GM12878 (cell line): ENCODE measurements at regions of chr1 and their contacts with region 1.

Region 1: GRCh38 chr1:111603979-111604378 is 15.6 kb upstream of the RAP1A start:
- DNase-seq: no peak
- ATAC-seq: peak; percentile 56
- H3K4me3 ChIP-seq: no peak overlapping the region
- H3K27ac ChIP-seq: peak overlapping the region; percentile 98
- H3K4me1 ChIP-seq: peaks cover 54% of the 10 kb centered on the region
- H3K27me3 ChIP-seq: no peaks in the 10 kb centered on the region
- CTCF ChIP-seq: no peak
- EP300 ChIP-seq: no peak
- POLR2A ChIP-seq: peak; percentile 70
- RAD21 ChIP-seq: no peak

Region 2: GRCh38 chr1:111203681-111204200 is 400.2 kb before region 1 on chr1:
- CTCF ChIA-PET with region 1: no interaction called
- POLR2A ChIA-PET with region 1: no interaction called
- RAD21 ChIA-PET with region 1: no interaction called
- SMC1A ChIA-PET with region 1: no interaction called
- in situ Hi-C with region 1: no loop called
- intact Hi-C with region 1: loop called (anchors 5 kb)
- DNase-seq: peak; percentile 77
- ATAC-seq: peak; percentile 57
- H3K4me3 ChIP-seq: peak overlapping the region; percentile 87
- H3K27ac ChIP-seq: peak overlapping the region; percentile 92
- H3K4me1 ChIP-seq: peaks cover 39% of the 10 kb centered on the region
- H3K27me3 ChIP-seq: no peaks in the 10 kb centered on the region
- CTCF ChIP-seq: no peak
- EP300 ChIP-seq: peak; percentile 30 to 69; a peak in 3 of 4 replicates
- POLR2A ChIP-seq: peak; percentile 72; the same call in 1 of the 2 replicates
- RAD21 ChIP-seq: 0 out of 2 replicates have a peak, but pooled peaks have one; percentile 2

Region 3: DNA sequence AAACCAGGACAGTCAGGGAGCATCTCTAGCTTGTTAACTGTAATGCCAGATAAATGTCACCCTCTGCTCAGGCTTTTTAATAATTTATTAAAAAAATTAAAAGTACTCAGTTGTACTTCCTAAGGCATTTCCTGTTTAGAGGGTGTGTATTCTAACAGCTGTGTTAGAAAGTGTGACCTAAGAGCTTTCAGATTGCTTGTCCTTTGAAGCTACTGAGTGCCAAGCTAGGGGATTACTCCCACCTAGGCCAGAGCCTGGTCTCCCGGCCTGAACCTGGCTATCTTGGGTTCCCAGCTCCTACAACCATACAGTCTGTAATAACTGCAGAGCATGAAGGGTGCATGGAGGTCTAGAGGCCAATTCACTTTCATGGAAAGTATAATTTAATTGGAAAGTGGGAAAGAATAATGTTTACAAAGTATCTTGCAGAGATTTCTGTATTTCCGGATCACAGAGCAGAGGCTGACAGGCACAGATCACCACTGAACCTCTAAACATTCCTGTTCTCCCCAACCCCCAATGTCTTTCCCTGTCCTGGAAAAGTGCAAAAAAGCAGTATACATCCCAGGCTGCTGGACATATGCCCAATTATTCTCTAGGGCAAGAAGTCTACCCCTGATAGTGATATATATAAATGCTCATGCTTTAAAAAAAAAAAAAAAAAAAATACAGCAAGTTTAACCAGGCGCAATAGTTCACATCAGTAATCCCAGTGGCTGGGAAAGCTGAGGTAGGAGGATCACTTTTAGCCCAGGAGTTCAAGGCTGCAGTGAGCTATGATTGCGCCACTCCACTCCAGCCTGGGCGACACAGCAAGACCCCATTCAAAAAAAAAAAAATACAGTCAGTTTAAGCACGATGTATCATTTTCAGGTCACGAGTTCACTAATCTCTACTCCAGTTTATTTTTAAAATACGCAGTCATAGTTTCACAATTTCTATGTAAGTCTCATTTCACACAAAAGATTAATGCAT is 21.0 kb before region 1 on chr1:
- CTCF ChIA-PET with region 1: interaction called, 8 read pairs
- POLR2A ChIA-PET with region 1: interaction called, 7 read pairs
- RAD21 ChIA-PET with region 1: interaction called, 14 read pairs
- SMC1A ChIA-PET with region 1: interaction called, 200 read pairs
- in situ Hi-C with region 1: no loop called
- intact Hi-C with region 1: no loop called
- DNase-seq: no peak
- ATAC-seq: peak; percentile 39
- H3K4me3 ChIP-seq: no peak overlapping the region
- H3K27ac ChIP-seq: no peak overlapping the region
- H3K4me1 ChIP-seq: peaks cover 18% of the 10 kb centered on the region
- H3K27me3 ChIP-seq: no peaks in the 10 kb centered on the region
- CTCF ChIP-seq: no peak
- EP300 ChIP-seq: no peak
- POLR2A ChIP-seq: no peak
- RAD21 ChIP-seq: no peak

Region 4: DNA sequence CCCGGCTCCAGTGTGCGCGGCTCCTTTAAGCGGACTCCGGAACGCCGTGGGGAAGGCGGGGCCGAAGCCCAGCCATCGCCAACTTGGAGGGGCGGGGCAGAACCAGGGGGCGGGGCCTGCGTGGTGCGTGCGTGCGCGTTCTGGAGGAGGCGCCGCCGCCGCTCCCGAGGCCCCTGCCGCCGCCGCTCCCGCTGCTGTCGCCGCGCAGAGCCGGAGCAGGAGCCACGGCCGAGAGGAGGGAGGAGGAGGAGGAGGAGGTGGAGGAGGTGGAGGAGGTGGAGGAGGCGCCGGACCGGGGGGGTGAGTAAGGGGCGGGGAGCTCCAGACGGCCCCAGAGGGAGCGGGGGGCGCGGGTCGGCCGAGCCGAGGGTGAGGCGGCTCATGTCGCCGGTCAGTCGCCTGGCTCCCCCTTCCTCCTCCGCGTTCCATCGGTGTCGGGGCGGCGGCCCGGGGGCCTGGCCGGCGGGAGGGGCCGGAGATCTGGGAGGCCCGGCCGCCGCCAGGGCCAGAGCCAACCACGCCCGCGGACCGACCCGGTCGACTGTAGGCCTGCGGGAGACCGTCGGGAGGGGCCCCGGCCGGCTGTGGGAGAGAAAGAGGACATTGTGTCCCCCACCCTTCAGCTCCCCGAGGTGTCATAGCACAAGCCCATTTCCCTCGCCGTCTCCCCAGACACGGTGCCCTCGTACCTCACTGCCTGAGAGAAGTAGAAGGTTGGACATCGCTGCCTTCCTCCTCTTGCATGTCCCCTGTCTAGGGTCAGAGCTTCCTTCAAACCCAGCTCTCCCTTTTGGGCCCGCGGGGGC is 15.9 kb after region 1 on chr1 and contains the start of gene RAP1A:
- CTCF ChIA-PET with region 1: interaction called, 143 read pairs
- POLR2A ChIA-PET with region 1: interaction called, 242 read pairs
- RAD21 ChIA-PET with region 1: interaction called, 116 read pairs
- SMC1A ChIA-PET with region 1: interaction called, 317 read pairs
- in situ Hi-C with region 1: no loop called
- intact Hi-C with region 1: loop called (anchors 1 kb)
- DNase-seq: peak; percentile 55
- ATAC-seq: peak; percentile 64
- H3K4me3 ChIP-seq: peak within 1 kb of the TSS; percentile 87
- H3K27ac ChIP-seq: peak within 1 kb of the TSS; percentile 94
- H3K4me1 ChIP-seq: peaks cover 34% of the 10 kb centered on the region
- H3K27me3 ChIP-seq: no peaks in the 10 kb centered on the region
- CTCF ChIP-seq: no peak
- EP300 ChIP-seq: no peak
- POLR2A ChIP-seq: peak; percentile 84
- RAD21 ChIP-seq: no peak
- polyA plus RNA-seq, gene RAP1A: 71.8 to 93.7 TPM

Region 5: DNA sequence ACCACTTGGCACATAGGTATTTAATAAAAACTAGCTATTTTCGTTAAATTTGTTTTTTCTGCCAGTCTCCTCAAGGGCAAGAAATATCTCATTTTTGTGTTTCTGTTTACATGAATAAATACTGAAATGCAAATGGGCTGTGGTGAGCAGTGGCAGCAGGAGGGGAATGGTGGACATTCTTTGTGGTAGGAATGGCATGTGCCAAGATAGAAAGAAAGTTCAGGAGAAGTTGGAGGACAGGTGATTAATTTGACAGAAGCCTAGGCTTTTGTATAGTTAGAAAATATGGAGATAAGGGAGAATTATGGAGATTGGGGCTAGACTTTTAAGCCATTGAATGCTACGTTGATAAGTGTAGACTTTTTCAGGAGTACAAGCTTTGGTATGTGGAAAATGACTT is 24.2 kb after region 1 on chr1:
- CTCF ChIA-PET with region 1: interaction called, 143 read pairs
- POLR2A ChIA-PET with region 1: interaction called, 242 read pairs
- RAD21 ChIA-PET with region 1: interaction called, 116 read pairs
- SMC1A ChIA-PET with region 1: interaction called, 317 read pairs
- in situ Hi-C with region 1: no loop called
- intact Hi-C with region 1: no loop called
- DNase-seq: no peak
- ATAC-seq: no peak
- H3K4me3 ChIP-seq: peak overlapping the region; percentile 36
- H3K27ac ChIP-seq: peak overlapping the region; percentile 53
- H3K4me1 ChIP-seq: peaks cover 26% of the 10 kb centered on the region; the same call in 1 of the 2 replicates
- H3K27me3 ChIP-seq: no peaks in the 10 kb centered on the region
- CTCF ChIP-seq: no peak
- EP300 ChIP-seq: no peak
- POLR2A ChIP-seq: no peak
- RAD21 ChIP-seq: no peak